GM12878 (cell line): ENCODE measurements at regions of chr22 and their contacts with region 1.

Region 1: GRCh38 chr22:26665813-26666231 is 8.4 kb downstream of the MIAT start:
- DNase-seq: no peak
- ATAC-seq: peak; percentile 63
- H3K4me3 ChIP-seq: no peak overlapping the region
- H3K27ac ChIP-seq: peak overlapping the region; percentile 48; the same call in 1 of the 2 replicates
- H3K4me1 ChIP-seq: peaks cover 31% of the 10 kb centered on the region
- H3K27me3 ChIP-seq: no peaks in the 10 kb centered on the region
- CTCF ChIP-seq: no peak
- EP300 ChIP-seq: no peak
- POLR2A ChIP-seq: no peak
- RAD21 ChIP-seq: no peak

Region 2: GRCh38 chr22:26429458-26430286 is 236.2 kb before region 1 on chr22:
- CTCF ChIA-PET with region 1: interaction called, 11 read pairs
- POLR2A ChIA-PET with region 1: no interaction called
- RAD21 ChIA-PET with region 1: no interaction called
- SMC1A ChIA-PET with region 1: no interaction called
- in situ Hi-C with region 1: no loop called
- intact Hi-C with region 1: no loop called
- DNase-seq: no peak
- ATAC-seq: no peak
- H3K4me3 ChIP-seq: peak overlapping the region; percentile 92
- H3K27ac ChIP-seq: peak overlapping the region; percentile 41
- H3K4me1 ChIP-seq: peaks cover 36% of the 10 kb centered on the region
- H3K27me3 ChIP-seq: no peaks in the 10 kb centered on the region
- CTCF ChIP-seq: no peak
- EP300 ChIP-seq: no peak
- POLR2A ChIP-seq: no peak
- RAD21 ChIP-seq: no peak

Region 3: GRCh38 chr22:26502688-26503561 is 162.9 kb before region 1 on chr22:
- CTCF ChIA-PET with region 1: interaction called, 44 read pairs
- POLR2A ChIA-PET with region 1: no interaction called
- RAD21 ChIA-PET with region 1: interaction called, 9 read pairs
- SMC1A ChIA-PET with region 1: interaction called, 8 read pairs
- in situ Hi-C with region 1: no loop called
- intact Hi-C with region 1: loop called (anchors 5 kb)
- DNase-seq: no peak
- ATAC-seq: peak; percentile 90
- H3K4me3 ChIP-seq: no peak overlapping the region
- H3K27ac ChIP-seq: no peak overlapping the region
- H3K4me1 ChIP-seq: peaks cover 6% of the 10 kb centered on the region
- H3K27me3 ChIP-seq: no peaks in the 10 kb centered on the region
- CTCF ChIP-seq: peak; percentile 66 to 72 (median 68)
- EP300 ChIP-seq: no peak
- POLR2A ChIP-seq: no peak
- RAD21 ChIP-seq: peak; percentile 66

Region 4: DNA sequence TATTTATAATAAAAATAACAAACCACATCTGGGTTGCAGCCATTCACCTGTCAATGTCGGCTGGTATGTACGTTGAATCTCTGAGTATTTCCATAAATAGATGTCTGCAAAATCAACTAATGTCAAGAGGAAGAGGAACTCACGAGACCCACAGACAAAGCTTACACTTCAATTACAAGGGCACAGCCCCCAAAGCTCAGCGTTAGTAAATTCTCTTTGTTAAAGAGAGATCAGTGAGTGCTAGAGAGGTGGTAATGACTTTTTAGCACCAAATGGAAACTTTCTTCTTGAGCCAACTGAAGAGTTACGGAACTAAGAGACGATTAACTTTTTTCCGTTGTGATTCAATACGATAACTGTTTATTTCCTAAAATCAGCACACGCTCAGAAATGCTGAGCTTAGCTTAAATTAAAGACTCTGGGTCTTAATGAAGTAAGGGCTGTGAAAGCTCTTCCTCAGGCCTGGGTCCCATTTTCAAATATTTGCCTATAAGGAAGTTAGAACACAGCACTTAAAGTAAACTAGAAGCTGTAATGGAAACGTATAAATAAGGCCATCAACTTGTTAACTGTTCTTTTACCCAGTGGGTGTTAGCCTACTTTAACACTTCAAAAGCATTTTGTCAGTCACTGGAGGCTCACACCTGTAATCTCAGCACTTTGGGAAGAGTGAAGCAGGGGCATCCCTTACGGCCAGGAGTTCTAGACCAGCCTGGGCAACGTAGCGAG is 130.8 kb before region 1 on chr22:
- CTCF ChIA-PET with region 1: interaction called, 12 read pairs
- POLR2A ChIA-PET with region 1: interaction called, 3 read pairs
- RAD21 ChIA-PET with region 1: interaction called, 12 read pairs
- SMC1A ChIA-PET with region 1: interaction called, 5 read pairs
- in situ Hi-C with region 1: no loop called
- intact Hi-C with region 1: no loop called
- DNase-seq: no peak
- ATAC-seq: peak; percentile 34
- H3K4me3 ChIP-seq: 0 out of 2 replicates have a peak overlapping the region, but pooled peaks have one; percentile 21
- H3K27ac ChIP-seq: peak overlapping the region; percentile 63
- H3K4me1 ChIP-seq: peaks cover 25% of the 10 kb centered on the region
- H3K27me3 ChIP-seq: no peaks in the 10 kb centered on the region
- CTCF ChIP-seq: no peak
- EP300 ChIP-seq: no peak
- POLR2A ChIP-seq: no peak
- RAD21 ChIP-seq: no peak

Region 5: DNA sequence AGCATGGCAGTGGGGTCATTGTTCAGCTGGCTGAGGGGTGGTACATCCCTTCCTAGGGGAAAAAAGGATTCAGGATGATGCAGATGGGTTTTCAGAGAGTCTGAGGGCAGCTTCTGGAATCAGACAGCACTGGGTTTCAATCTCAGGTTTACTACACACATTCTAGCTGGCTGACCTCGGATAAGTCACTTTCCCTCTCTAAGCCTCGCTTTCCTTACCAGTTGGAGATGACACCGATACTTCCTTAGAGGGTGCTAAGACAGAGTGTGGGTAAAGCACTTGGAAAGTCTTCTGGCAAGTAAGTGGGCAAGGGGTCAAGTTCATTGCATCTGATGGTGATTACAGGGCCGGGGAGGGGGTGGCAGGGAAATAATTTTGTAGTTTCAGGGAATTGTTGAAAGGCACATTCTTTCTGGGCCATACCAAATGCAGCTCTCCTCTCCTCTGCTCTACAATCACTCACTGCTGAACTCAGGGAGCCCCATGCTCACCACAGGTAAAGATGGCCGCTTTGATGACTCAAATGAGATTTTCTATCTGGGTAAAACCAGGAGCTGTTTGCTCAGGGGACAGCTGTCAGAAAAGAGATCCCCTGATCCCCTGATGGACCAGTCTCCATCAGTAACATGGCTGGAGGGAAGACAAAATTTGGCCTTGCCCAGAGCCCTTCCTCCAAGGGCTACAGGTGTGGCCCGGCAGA is 14.9 kb before region 1 on chr22:
- CTCF ChIA-PET with region 1: interaction called, 12 read pairs
- POLR2A ChIA-PET with region 1: interaction called, 7 read pairs
- RAD21 ChIA-PET with region 1: no interaction called
- SMC1A ChIA-PET with region 1: interaction called, 3 read pairs
- in situ Hi-C with region 1: no loop called
- intact Hi-C with region 1: no loop called
- DNase-seq: no peak
- ATAC-seq: peak; percentile 51
- H3K4me3 ChIP-seq: no peak overlapping the region
- H3K27ac ChIP-seq: no peak overlapping the region
- H3K4me1 ChIP-seq: peaks cover 27% of the 10 kb centered on the region
- H3K27me3 ChIP-seq: peaks cover 0 to 5% of the 10 kb centered on the region in 2 experiments; a peak in 2 of 4 replicates
- CTCF ChIP-seq: no peak
- EP300 ChIP-seq: no peak
- POLR2A ChIP-seq: no peak
- RAD21 ChIP-seq: no peak